Naive thymus-derived CD4-positive, alpha-beta T cell (primary cell): ENCODE measurements at regions of chr9 and their contacts with region 1.

Region 1: DNA sequence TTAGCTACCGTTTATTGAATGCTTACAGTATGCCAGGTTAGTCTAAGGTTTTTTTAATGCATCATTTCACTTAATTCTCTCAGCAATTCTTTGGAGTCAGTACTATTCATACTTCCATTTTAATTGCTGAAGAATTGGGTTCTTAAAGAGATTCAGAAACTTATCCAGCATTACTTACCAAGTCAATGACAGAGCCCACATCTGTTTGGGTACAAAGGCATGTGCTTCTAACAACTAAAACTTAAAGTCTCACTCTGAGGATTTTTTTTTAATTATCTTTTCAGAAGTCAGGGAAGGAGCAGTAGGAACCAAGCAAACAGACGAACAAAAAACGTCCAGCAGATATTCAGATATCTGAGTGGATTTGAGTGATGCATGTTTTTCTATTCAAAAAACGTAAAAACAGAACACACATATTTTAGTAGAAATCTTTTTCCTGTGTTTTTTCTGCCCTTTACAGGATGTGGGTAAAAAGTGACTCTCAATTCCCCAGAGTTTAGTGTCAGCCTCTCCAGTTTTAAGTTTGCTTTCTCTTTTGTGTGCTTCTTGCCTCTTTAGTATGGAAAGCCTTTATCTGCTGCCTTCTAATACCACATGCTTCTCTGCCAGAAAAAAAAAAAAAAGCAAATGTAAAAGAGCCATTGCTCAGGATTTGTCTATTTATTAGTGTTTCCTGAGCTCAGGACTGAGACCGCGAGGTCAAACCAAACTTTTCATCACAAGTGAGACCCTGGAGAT is 118.0 kb downstream of the PRKACG start:
- DNase-seq: peak in 7 of 9 donors; percentile 26 to 79 (median 70)
- ATAC-seq: peak; percentile 81
- H3K4me3 ChIP-seq: peak overlapping the region; percentile 15
- H3K4me3 Mint-ChIP-seq: peak overlapping the region; percentile 3 to 89 (median 77)
- H3K27ac ChIP-seq: peak overlapping the region; percentile 64
- H3K27ac Mint-ChIP-seq: peak overlapping the region; percentile 86 to 95 (median 91)
- H3K4me1 ChIP-seq: peaks cover 0 to 26% of the 10 kb centered on the region in 2 donors
- H3K4me1 Mint-ChIP-seq: peaks cover 33 to 68% (median 62%) of the 10 kb centered on the region in 7 donors
- H3K27me3 ChIP-seq: no peaks in the 10 kb centered on the region
- H3K27me3 Mint-ChIP-seq: no peaks in the 10 kb centered on the region

Region 2: DNA sequence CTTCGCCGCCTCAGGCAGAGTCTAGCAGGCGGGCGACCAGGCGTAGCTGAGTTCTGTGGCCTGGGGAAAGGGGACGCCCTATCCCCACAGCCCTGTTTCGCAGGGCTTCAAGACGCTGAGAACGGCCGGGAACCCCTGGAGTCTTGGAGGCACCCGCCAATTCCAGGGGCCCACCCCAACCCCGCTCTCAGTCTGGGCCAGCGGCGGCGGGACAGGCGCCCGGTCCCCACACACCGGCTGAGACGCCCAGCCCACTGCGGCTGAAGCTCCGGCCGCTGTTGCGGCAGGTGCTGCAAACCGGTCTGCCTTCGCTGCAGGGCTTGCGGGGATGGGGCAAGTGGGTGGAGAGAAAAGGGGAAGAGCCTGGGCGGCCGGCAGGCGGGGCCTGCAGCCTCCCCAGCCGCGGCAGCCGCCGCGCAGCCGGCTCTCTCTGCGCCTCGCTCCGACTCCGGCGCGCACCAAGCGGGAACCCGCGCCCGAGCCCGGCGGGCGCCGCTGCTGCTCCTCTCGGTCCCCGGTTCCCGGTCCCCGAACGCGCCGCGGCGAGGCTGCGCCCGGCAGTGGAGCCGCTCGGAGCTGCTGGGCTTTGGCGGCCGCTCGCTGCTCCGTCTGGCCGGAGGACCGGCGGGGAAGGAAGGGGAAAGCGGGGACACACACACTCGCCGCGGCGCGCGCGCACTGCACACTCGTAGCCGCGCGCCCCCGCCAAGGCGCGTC is 190.9 kb before region 1 on chr9 and contains the start of gene PIP5K1B:
- CTCF ChIA-PET with region 1: no interaction called
- POLR2A ChIA-PET with region 1: no interaction called
- intact Hi-C with region 1: loop called in 1 of 2 experiments (anchors 5 kb)
- DNase-seq: peak in 6 of 9 donors; percentile 2 to 77 (median 13)
- ATAC-seq: peak; percentile 87
- H3K4me3 ChIP-seq: no peak within 1 kb of the TSS
- H3K4me3 Mint-ChIP-seq: peak within 1 kb of the TSS; percentile 67 to 95 (median 80)
- H3K27ac ChIP-seq: no peak within 1 kb of the TSS
- H3K27ac Mint-ChIP-seq: peak within 1 kb of the TSS in 1 of 9 donors; percentile 70
- H3K4me1 ChIP-seq: peaks cover 0 to 6% of the 10 kb centered on the region in 2 donors
- H3K4me1 Mint-ChIP-seq: peaks cover 5 to 25% (median 20%) of the 10 kb centered on the region in 7 donors
- H3K27me3 ChIP-seq: peaks cover 3 to 14% of the 10 kb centered on the region in 2 donors
- H3K27me3 Mint-ChIP-seq: peaks cover 74 to 86% (median 77%) of the 10 kb centered on the region in 5 donors
- total RNA-seq, gene PIP5K1B: 0.22 to 4.2 (median 1.5) TPM

Region 3: GRCh38 chr9:68872026-68872501 is 23.8 kb before region 1 on chr9:
- CTCF ChIA-PET with region 1: no interaction called
- POLR2A ChIA-PET with region 1: no interaction called
- intact Hi-C with region 1: no loop called
- DNase-seq: no peak
- ATAC-seq: no peak
- H3K4me3 ChIP-seq: no peak overlapping the region
- H3K4me3 Mint-ChIP-seq: no peak overlapping the region
- H3K27ac ChIP-seq: no peak overlapping the region
- H3K27ac Mint-ChIP-seq: no peak overlapping the region
- H3K4me1 ChIP-seq: no peaks in the 10 kb centered on the region
- H3K4me1 Mint-ChIP-seq: no peaks in the 10 kb centered on the region
- H3K27me3 ChIP-seq: no peaks in the 10 kb centered on the region
- H3K27me3 Mint-ChIP-seq: no peaks in the 10 kb centered on the region

Region 4: DNA sequence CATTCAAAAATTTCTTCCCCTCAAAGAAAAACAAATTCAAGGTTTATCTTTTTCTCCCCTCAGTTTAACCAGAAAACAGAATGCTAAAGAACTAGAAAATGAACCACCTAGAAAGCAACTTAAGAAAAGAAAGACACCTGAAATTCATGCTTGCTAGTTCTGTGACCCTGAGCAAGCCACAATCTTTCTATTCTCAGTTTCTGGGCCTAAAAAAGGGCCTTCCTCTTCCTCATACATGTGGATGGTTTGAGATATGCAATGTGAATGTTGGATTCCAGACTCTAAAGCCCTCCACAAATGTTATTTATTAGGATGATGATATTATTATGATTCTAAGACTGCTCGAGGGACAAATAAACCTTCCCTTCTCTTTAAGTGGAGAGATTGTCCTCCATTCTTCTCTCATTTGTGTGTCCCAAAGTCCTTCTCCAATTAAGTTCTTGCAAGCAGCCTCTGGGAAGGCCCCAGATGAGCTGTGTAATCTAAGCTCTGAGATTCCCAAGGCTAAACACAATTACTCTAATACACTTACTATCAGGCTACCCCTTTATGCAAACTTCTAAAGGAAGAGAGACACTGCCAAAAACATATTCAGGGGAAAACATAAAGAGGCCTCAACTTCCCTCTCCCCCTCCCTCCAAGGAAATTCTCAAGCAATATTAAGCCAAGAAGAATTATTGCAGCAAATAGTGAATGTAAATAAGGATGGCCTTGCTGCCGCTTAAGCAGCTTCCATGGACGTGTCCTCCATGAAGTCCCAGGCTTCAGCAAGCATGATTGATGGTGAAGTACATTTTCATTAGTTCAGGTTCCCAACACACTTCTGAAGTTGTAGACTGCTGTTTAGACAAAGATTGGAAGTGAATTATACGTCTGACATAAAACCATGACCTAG is 37.8 kb after region 1 on chr9:
- CTCF ChIA-PET with region 1: no interaction called
- POLR2A ChIA-PET with region 1: no interaction called
- intact Hi-C with region 1: loop called in 1 of 2 experiments (anchors 5 kb)
- DNase-seq: no peak
- ATAC-seq: no peak
- H3K4me3 ChIP-seq: no peak overlapping the region
- H3K4me3 Mint-ChIP-seq: no peak overlapping the region
- H3K27ac ChIP-seq: no peak overlapping the region
- H3K27ac Mint-ChIP-seq: no peak overlapping the region
- H3K4me1 ChIP-seq: peaks cover 4 to 14% of the 10 kb centered on the region in 2 donors
- H3K4me1 Mint-ChIP-seq: peaks cover 11 to 22% (median 15%) of the 10 kb centered on the region in 7 donors
- H3K27me3 ChIP-seq: no peaks in the 10 kb centered on the region
- H3K27me3 Mint-ChIP-seq: peaks cover 20 to 52% (median 34%) of the 10 kb centered on the region in 5 donors

Region 5: GRCh38 chr9:68999393-69000105 is 103.6 kb after region 1 on chr9:
- CTCF ChIA-PET with region 1: interaction called, 4 read pairs
- POLR2A ChIA-PET with region 1: no interaction called
- intact Hi-C with region 1: loop called (anchors 5 kb)
- DNase-seq: peak in 8 of 9 donors; percentile 56 to 82 (median 74)
- ATAC-seq: peak; percentile 93
- H3K4me3 ChIP-seq: no peak overlapping the region
- H3K4me3 Mint-ChIP-seq: no peak overlapping the region
- H3K27ac ChIP-seq: no peak overlapping the region
- H3K27ac Mint-ChIP-seq: peak overlapping the region in 4 of 9 donors; percentile 14 to 75 (median 44)
- H3K4me1 ChIP-seq: peaks cover 0 to 15% of the 10 kb centered on the region in 2 donors
- H3K4me1 Mint-ChIP-seq: peaks cover 14 to 41% (median 30%) of the 10 kb centered on the region in 7 donors
- H3K27me3 ChIP-seq: no peaks in the 10 kb centered on the region
- H3K27me3 Mint-ChIP-seq: peaks cover 0 to 8% (median 0%) of the 10 kb centered on the region in 5 donors

Region 6: DNA sequence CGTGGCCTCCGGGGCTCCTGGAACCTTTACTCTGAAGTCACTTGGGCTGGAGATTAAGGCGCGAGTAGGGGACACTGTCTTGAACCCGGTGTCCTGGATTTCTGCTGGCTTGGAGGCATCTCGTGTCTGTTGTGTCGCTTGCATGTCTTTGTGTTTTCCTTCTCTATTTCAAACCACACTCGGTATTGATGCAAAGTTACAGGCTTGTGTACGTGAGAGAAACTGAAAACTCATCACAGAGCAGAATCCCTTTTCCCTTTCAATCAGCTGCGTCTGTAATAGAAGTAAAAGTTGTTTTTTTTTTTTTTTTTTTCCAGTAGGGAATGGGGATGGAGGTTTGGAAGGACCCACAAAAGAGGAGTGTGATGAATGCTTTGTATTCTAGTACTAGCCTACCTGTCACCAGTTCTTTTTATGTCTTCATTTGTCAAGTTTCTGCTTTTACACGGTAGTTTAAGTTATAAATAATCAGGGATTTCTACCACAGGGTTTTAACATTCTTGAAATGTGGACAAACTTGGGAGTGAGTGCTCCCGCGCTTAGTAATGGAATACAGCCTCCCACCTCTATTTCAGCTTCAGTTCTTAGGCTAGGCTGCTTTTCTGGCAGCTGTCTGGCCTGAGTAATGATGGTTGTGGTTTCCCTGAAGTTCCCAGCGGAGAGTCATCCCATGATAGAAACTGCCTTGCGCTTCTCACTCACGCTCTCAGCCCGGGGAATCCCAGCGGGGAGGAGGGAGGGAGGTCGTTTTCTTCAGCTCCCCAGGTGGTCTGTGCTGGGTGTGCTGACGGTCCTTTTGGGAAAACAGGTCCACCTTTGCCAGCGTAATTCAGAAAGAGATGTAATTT is 278.9 kb after region 1 on chr9:
- CTCF ChIA-PET with region 1: no interaction called
- POLR2A ChIA-PET with region 1: no interaction called
- intact Hi-C with region 1: loop called in 1 of 2 experiments (anchors 10 kb)
- DNase-seq: peak in 1 of 9 donors; percentile 69
- ATAC-seq: peak; percentile 57
- H3K4me3 ChIP-seq: peak overlapping the region; percentile 36
- H3K4me3 Mint-ChIP-seq: peak overlapping the region; percentile 76 to 92 (median 82)
- H3K27ac ChIP-seq: no peak overlapping the region
- H3K27ac Mint-ChIP-seq: peak overlapping the region in 1 of 9 donors; percentile 79
- H3K4me1 ChIP-seq: peaks cover 10 to 12% of the 10 kb centered on the region in 2 donors
- H3K4me1 Mint-ChIP-seq: peaks cover 25 to 60% (median 30%) of the 10 kb centered on the region in 7 donors
- H3K27me3 ChIP-seq: no peaks in the 10 kb centered on the region
- H3K27me3 Mint-ChIP-seq: peaks cover 15 to 43% (median 24%) of the 10 kb centered on the region in 5 donors